ENCODE measurements at regions of chr4 and their contacts with region 1.

Region 1: DNA sequence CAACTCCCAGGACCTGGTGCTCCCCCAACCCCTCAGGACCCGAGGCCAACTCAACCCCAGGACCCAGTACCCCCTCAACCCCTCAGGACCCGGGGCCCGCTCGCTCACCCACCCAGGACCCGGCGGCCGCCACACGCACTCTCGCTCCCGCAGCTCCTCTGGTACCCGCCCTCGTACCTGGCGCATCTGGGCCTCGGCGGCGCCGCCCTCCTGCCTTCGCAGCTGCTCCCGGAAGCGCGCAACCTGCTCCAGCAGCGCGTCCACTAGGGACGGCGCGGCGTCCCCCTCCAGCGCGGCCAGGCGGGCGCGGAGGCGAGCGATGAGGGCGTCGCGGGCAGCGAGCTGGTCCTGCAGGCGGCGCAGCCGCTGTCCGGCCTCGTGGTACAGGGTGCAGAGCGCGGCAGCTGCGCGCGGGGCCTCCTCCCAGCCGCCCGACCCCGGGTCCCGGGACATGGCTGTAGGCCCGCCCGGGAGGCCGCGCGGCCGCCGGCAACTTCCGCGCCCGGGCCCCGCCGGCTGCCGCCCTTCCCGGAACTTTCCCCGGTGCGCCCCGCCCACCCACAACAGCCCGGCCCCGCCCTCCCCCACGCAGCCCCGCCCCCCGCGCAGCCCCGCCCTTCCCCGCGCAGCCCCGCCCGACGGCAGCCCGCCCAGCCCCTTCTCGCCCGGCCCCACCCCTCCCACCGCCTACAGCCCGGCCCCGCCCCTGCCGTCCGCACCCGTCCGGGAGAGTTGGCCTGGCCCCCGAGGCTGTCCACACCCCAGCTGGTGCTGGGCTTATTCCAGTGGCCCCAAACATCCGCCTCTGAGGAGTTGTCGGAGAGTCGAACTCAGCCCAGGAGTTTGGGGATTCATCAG is at the start of gene TNIP2:
- DNase-seq: no peak
- H3K4me3 ChIP-seq: peak within 1 kb of the TSS; percentile 75
- CTCF ChIP-seq: peak; percentile 41

Region 2: DNA sequence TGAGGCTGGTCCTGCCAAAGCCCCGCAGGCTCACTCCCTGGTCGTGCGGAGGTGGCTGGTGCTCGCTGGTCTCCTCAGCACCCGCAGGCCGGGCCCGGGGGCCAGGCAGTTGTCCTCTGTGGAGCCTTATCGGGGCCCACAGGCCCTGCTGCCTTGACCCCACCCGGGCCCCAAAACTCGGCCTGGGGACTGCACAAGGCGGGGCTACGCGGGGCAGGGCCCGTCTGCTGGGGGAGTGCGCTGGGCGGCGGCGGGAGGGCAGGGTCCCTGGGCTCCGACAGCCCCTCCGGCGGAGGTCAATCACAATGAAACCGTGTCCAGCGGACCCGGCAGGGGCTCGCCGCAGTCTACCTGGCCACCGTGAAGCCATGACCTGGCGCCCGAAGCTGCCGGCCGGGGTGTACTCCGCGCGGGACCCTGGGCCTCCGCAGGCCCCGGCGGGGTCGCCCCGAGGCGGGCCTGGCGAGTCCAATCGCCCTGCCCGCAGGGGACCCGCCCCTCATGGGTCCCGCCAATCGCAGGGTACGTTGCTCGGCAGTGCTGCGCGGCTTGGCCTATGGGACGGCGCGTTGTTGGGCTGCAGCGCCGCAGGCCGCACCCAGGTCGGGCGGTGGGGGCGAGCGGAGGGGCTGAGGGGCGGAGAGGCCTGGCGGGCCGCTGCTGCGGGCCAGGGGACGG is 87.3 kb after region 1 on chr4 and contains the start of gene ADD1:
- in situ Hi-C with region 1: loop called (anchors 10 kb)
- DNase-seq: peak; percentile 66
- H3K4me3 ChIP-seq: peak within 1 kb of the TSS; percentile 83
- CTCF ChIP-seq: no peak

Measured in astrocyte of the cerebellum (primary cell).